AG04449 (cell line): ENCODE measurements at regions of chr11 and their contacts with region 1.

Region 1: GRCh38 chr11:128884703-128885338 is 6.3 kb upstream of the KCNJ5 start:
- DNase-seq: no peak
- H3K4me3 ChIP-seq: no peak overlapping the region
- CTCF ChIP-seq: peak; percentile 59

Region 2: DNA sequence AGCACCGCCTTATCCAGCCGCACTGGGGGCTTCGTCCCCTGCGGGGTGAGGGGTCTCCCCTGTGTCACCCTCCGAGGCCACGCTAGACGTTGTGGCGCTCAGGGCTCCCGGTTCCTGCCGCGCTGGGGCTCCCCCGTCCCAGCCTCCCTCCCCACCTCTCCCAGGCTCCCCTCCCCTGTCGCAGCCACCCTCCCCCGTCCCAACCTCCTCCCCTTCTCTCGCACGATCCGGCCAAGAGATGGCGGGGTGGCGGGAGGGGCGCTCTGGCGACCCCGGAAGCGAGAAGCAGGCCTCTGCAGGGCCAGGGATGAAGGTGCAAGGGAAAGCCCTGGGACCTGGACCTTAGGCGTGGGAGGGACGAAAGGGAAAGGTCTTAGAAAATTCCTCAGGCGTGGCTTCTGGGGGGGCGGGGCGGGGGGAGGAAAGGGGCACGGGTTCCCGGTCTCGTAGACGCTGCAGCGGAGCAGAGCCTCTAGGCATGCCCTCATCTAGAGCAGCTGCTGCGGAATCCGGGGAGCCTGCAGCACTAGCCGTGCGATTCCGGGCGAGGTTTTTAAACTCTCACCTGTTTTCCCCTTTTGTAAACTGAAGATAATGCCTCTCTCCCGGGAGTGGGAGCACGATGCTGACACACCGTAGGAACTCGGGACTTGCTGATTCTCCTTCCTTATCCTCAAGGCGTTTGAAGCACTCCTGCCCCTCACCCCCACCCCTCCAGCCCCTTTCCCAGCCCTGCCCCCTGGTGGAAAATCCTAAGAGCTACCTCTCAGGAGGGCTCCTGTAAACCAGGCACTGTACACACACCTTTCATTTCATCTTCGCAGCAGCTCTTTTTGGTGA is 20.7 kb after region 1 on chr11:
- CTCF ChIA-PET with region 1: interaction called, 50 read pairs
- POLR2A ChIA-PET with region 1: no interaction called
- DNase-seq: no peak
- H3K4me3 ChIP-seq: peak overlapping the region; percentile 60
- CTCF ChIP-seq: peak; percentile 29

Region 3: GRCh38 chr11:128936606-128937251 is 51.9 kb after region 1 on chr11:
- CTCF ChIA-PET with region 1: interaction called, 18 read pairs
- POLR2A ChIA-PET with region 1: no interaction called
- DNase-seq: no peak
- H3K4me3 ChIP-seq: no peak overlapping the region
- CTCF ChIP-seq: no peak

Region 4: GRCh38 chr11:128948589-128948988 is 63.8 kb after region 1 on chr11:
- CTCF ChIA-PET with region 1: interaction called, 488 read pairs
- POLR2A ChIA-PET with region 1: no interaction called
- DNase-seq: no peak
- H3K4me3 ChIP-seq: no peak overlapping the region
- CTCF ChIP-seq: no peak

Region 5: DNA sequence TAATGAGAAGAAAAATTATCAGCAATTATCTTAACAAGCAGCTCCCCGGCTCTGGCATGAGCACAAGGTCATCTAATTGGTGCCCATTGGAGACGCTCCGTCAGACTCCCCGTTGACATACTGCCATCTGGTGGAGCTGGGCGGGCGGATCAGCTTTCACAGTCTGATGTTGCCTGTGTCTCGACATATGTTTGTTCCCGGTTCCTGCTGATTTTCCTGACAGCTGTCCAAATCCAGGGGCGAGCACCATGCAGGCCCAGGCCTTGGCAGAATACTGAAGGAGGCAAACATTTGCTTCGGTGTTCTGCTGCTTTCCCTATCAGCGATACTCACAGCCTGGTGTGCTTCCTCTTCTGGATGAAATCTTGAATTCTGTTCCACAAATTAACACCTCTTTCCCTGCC is 447.1 kb after region 1 on chr11:
- CTCF ChIA-PET with region 1: interaction called, 21 read pairs
- POLR2A ChIA-PET with region 1: interaction called, 3 read pairs
- DNase-seq: peak; percentile 12
- H3K4me3 ChIP-seq: no peak overlapping the region
- CTCF ChIP-seq: peak; percentile 90